SK-N-SH (cell line): ENCODE measurements at regions of chr7 and their contacts with region 1.

Region 1: GRCh38 chr7:19964246-19964645 is 190.8 kb upstream of the TMEM196 start:
- DNase-seq: no peak
- H3K4me3 ChIP-seq: no peak overlapping the region
- H3K27ac ChIP-seq: no peak overlapping the region
- H3K4me1 ChIP-seq: no peaks in the 10 kb centered on the region
- H3K27me3 ChIP-seq: no peaks in the 10 kb centered on the region
- CTCF ChIP-seq: no peak
- EP300 ChIP-seq: no peak
- RAD21 ChIP-seq: no peak

Region 2: GRCh38 chr7:19982841-19983835 is 18.9 kb after region 1 on chr7:
- CTCF ChIA-PET with region 1: interaction called, 12 read pairs
- POLR2A ChIA-PET with region 1: no interaction called
- DNase-seq: no peak
- H3K4me3 ChIP-seq: no peak overlapping the region
- H3K27ac ChIP-seq: no peak overlapping the region
- H3K4me1 ChIP-seq: no peaks in the 10 kb centered on the region
- H3K27me3 ChIP-seq: no peaks in the 10 kb centered on the region
- CTCF ChIP-seq: peak; percentile 71
- EP300 ChIP-seq: no peak
- RAD21 ChIP-seq: peak; percentile 78

Region 3: GRCh38 chr7:20183086-20183485 is 218.8 kb after region 1 on chr7:
- CTCF ChIA-PET with region 1: no interaction called
- POLR2A ChIA-PET with region 1: no interaction called
- DNase-seq: no peak
- H3K4me3 ChIP-seq: no peak overlapping the region
- H3K27ac ChIP-seq: no peak overlapping the region
- H3K4me1 ChIP-seq: no peaks in the 10 kb centered on the region
- H3K27me3 ChIP-seq: no peaks in the 10 kb centered on the region
- CTCF ChIP-seq: no peak
- EP300 ChIP-seq: no peak
- RAD21 ChIP-seq: no peak